ENCODE measurements at regions of chr1 and their contacts with region 1.

Region 1: GRCh38 chr1:211680752-211681327 is 5.4 kb upstream of the NEK2 start:
- ATAC-seq: peak; percentile 59 to 93 (median 85)
- H3K4me3 ChIP-seq: no peak overlapping the region
- H3K27ac ChIP-seq: no peak overlapping the region
- H3K4me1 ChIP-seq: peaks cover 0 to 2% of the 10 kb centered on the region in 2 donors

Region 2: DNA sequence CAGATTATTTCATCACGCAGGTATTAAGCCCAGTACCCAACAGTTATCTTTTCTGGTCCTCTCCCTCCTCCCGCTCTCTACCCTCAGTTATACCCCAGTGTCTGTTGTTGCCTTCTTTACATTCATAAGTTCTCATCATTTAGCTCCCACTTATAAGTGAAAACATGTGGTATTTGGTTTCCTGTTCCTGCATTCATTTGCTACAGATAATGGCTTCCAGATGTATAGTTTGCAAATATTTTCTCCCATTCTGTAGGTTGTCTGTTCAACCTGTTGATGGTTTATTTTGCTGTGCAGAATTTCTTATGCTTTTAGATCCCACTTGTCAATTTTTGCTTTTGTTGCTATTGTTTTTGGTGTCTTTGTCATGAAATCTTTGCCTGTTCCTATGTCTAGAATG is 525.8 kb before region 1 on chr1:
- in situ Hi-C with region 1: no loop called
- ATAC-seq: no peak
- H3K4me3 ChIP-seq: no peak overlapping the region
- H3K27ac ChIP-seq: no peak overlapping the region
- H3K4me1 ChIP-seq: no peaks in the 10 kb centered on the region

Region 3: GRCh38 chr1:211613093-211613947 is 67.5 kb before region 1 on chr1:
- in situ Hi-C with region 1: no loop called
- ATAC-seq: peak; percentile 91 to 99 (median 97)
- H3K4me3 ChIP-seq: no peak overlapping the region
- H3K27ac ChIP-seq: no peak overlapping the region
- H3K4me1 ChIP-seq: peaks cover 0 to 2% of the 10 kb centered on the region in 2 donors

Region 4: GRCh38 chr1:211830330-211831142 is 149.7 kb after region 1 on chr1 and contains the start of gene LPGAT1:
- in situ Hi-C with region 1: loop called in 1 of 9 experiments (anchors 25 kb)
- ATAC-seq: peak; percentile 85 to 94 (median 92)
- H3K4me3 ChIP-seq: peak within 1 kb of the TSS; percentile 71 to 96 (median 86)
- H3K27ac ChIP-seq: peak within 1 kb of the TSS; percentile 77 to 85
- H3K4me1 ChIP-seq: peaks cover 7 to 21% of the 10 kb centered on the region in 2 donors
- total RNA-seq, gene LPGAT1: 25.1 to 41.3 (median 31.9) TPM

Region 5: DNA sequence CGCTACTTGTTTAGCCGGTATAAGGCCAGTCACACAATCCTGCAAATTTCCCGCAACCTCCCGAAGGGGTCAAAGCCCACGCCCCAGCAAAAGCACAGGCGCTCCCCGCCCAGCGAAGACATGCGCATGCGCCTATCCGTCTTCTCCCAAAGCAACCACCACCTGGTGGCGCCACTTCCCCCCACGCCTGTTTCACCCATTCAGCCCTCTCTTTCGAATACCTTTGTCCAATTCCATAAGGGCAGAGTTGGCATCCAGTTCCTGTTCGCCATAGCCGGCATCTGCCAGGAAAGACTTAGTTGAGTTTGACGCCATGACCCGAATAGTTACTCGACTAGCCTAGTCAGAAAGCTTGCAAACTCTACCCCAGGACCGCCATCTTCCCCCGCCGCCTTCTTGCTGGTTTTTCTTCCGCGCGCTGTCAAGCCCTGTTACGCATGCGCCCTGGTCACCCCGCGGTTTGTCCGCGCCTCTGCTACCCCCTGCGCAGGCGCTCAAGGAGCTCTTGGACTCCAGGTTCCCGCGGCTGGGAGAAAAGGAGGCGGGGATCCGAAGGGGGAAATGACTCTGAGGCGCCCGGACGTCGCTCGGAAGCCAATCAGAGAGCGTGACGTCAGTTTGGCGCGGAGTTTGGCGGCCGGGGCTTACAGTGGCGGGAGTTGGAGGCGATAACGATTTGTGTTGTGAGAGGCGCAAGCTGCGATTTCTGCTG is 354.4 kb after region 1 on chr1 and contains the starts of genes DTL and INTS7:
- in situ Hi-C with region 1: loop called in 3 of 9 experiments (anchors 25 kb)
- ATAC-seq: peak; percentile 82 to 93 (median 90)
- H3K4me3 ChIP-seq: peak within 1 kb of the TSS; percentile 60 to 83 (median 71)
- H3K27ac ChIP-seq: peak within 1 kb of the TSS; percentile 84 to 93
- H3K4me1 ChIP-seq: peaks cover 14 to 16% of the 10 kb centered on the region in 2 donors
- total RNA-seq, gene DTL: 1.1 to 32.5 (median 3.0) TPM
- total RNA-seq, gene INTS7: 12.1 to 31.7 (median 13.8) TPM

Region 6: DNA sequence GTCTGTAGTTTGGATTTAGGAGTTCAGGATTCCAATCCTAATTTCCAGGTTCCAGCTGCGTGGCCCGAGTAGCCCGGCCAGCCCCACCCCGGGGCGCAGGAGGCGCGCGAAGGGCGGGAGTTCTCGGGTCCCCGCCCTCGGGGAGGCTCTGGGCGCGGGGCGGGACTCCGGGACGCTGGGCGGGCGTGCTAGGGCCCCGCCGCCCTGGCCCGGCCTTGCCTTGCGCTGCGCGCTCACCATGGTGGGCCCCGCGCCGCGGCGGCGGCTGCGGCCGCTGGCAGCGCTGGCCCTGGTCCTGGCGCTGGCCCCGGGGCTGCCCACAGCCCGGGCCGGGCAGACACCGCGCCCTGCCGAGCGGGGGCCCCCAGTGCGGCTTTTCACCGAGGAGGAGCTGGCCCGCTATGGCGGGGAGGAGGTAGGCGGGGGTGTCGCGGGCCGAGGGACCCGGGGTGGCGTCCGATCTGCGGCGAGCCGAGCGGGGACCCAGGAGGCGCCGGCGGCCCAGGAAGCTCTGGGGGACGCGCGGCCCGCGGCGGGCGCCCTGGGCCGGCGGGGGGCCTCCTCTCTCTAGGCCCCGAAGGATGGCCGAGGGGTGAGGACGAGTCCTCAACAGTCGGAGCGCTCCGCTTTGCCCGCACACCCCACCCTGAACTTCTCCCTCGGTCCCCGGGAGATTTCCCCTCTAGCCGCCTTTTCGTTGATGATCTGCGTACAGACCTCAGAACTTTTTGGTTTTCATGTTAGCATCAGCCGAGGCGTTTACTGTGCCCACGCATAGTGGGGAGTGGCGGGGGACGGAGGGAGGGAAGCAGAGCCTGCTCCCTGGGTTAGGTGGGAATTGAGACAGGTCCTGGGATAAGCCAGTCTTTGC is 752.1 kb after region 1 on chr1 and contains the start of gene NENF:
- in situ Hi-C with region 1: loop called in 1 of 9 experiments (anchors 25 kb)
- ATAC-seq: peak; percentile 96 to 98 (median 98)
- H3K4me3 ChIP-seq: peak within 1 kb of the TSS; percentile 57 to 69 (median 67)
- H3K27ac ChIP-seq: peak within 1 kb of the TSS in 1 of 2 donors; percentile 13
- H3K4me1 ChIP-seq: peaks cover 0 to 8% of the 10 kb centered on the region in 2 donors
- total RNA-seq, gene NENF: 23.2 to 73.6 (median 33.0) TPM

Measured in motor neuron (in vitro differentiated cells).